Right ventricle myocardium inferior (tissue), 1 donor: ENCODE measurements at regions of chr14 and their contacts with region 1.

Region 1: GRCh38 chr14:45426670-45427282 is 173.8 kb upstream of the MIS18BP1 start:
- DNase-seq: no peak
- ATAC-seq: peak; percentile 39

Region 2: GRCh38 chr14:45112889-45113781 is 313.6 kb before region 1 on chr14:
- intact Hi-C with region 1: no loop called
- DNase-seq: no peak
- ATAC-seq: no peak

Region 3: DNA sequence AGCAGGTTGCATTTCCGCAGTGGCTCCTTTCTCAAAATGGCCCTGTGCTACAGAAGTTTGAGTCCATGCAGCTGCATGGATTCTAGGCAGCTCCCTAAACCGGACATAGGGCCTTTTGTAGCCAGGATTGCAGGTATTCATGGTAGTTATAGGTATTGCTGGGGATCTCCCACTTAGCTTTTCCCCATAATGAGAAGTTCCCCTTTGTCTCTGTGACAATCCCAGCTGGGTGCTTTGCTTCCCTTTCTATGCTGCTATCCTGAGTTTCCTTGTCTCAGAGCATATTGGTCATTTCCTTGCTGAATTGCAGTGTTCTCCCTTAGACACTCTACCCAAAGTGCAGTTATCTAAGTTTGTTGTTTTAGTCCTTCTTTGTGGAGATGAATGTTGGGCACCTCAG is 52.9 kb before region 1 on chr14:
- intact Hi-C with region 1: no loop called
- DNase-seq: no peak
- ATAC-seq: no peak

Region 4: DNA sequence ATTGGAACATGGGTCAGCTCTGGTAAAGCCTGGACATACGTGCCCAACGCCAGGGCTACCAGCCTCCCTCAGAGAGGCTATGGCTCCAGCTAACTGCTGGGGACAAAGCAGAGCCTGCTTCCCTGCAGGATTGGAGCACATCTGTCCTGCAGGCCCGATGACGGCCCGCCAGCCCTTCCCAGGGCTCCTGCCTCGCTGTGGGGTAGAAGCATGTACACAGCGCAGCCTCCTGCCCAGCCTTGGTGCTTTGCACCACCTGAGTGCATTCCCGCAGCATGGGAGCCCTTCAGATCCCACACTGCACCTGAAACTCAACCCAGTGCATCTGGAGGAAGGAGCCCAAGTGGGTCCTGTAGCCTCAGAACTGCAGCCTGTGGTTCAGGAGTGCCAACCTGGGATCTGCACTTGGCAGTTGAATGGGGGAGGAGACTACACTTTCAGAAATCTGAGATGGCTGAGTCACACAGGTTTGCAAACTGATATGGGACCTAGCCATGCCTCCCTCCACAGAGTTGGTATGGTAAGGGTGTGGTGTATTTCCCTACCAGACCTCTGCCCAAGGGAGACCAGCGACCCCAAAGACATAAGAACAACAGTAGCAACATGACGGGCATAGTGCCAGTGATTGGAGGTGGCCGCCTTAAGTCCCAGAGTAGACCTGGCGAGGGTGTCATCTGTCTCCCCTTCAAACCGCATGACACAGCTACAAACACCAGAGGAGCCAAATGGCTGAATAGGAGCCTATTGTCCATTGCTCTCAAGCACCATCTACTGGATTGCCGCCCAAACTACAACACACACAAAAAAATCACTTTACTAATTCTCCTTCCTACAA is 100.2 kb after region 1 on chr14:
- intact Hi-C with region 1: loop called (anchors 1 kb)
- DNase-seq: no peak
- ATAC-seq: no peak

Region 5: GRCh38 chr14:45559618-45560017 is 132.8 kb after region 1 on chr14:
- intact Hi-C with region 1: no loop called
- DNase-seq: no peak
- ATAC-seq: no peak

Region 6: GRCh38 chr14:45978603-45979002 is 551.8 kb after region 1 on chr14:
- intact Hi-C with region 1: no loop called
- DNase-seq: no peak
- ATAC-seq: no peak